ENCODE measurements at regions of chr1 and their contacts with region 1.

Region 1: DNA sequence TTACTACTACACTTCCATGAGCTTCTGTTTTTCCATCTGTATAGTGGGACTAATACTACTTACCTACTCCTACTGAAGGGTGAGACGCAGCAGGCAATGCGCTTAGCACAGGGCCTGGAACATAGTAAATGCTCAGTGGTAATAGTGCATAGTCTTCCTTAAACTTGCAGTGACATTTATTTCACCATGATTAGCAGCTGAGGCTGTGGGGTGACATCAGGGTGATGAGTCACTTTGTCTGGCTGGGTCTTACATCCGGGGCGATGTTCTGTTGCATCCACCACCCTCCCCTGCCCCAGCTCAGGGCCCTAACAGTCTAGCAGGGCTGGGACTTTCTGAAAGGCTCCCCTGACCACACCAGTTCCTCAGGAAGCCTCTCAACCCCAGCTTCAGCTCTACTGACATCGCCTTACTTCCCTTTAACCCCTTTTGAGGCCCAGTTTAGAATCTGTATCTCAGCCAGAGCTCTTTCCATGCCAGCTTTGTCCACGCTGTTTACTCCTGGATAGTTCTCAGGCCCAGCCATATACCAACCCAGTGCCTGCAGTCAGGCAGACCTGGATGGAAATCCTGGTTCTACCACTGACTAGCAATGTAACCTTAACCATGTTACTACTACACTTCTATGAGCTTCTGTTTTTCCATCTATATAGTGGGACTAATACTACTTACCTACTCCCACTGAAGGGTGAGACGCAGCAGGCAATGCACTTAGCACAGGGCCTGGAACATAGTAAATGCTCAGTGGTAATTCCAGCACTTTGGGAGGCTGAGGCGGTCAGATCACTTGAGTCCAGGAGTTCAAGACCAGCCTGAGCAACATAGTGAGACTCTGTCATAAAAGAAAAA is 66.3 kb downstream of the CD58 start:
- DNase-seq: peak; percentile 96
- H3K4me3 Mint-ChIP-seq: peak overlapping the region; percentile 46
- H3K27ac Mint-ChIP-seq: peak overlapping the region; percentile 96
- H3K4me1 Mint-ChIP-seq: peaks cover 72% of the 10 kb centered on the region
- H3K27me3 Mint-ChIP-seq: no peaks in the 10 kb centered on the region

Region 2: DNA sequence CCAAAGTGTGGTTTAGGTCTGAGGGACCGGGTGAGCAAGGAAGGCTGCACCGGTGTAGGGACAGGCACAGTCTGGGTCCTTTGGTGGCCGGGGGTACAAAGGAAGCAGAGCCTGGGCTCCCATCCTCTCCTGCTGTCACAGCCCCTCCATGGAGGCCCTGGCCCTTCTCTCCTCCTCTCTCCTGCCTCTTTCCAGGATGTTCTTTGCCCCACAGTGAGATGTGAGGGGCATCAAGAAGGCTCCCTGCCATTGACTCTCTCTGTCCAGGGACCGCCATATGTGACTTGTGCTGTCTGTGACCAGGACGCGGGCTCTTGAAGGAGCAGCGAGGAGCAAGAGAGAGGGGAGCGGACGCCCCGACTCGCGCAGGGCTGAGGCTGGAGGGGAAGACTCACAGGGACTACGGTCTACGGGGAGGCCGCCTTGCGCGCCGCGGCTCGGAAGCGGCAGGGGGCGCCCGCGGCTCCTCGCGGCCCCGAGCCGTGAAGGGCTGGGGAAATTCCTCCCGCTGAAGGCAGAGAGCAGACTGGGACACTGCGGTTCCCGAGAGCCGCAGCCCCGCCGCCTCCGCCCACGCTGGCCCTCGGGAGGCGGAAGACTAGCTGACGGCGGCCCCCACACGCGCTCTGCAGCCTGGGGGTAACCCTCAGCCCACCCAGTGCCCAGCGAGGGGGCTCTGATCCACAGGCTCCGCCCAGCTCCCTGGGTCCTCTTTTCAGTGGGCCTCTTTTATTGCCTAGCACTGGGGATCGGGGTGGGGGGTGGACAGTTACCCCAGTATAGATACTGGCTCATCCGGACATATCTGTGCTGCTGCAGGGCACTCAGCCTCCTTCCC is 352.6 kb before region 1 on chr1:
- intact Hi-C with region 1: loop called (anchors 5 kb)
- DNase-seq: peak; percentile 94
- H3K4me3 Mint-ChIP-seq: peak overlapping the region; percentile 77
- H3K27ac Mint-ChIP-seq: peak overlapping the region; percentile 74
- H3K4me1 Mint-ChIP-seq: peaks cover 13% of the 10 kb centered on the region
- H3K27me3 Mint-ChIP-seq: peaks cover 33% of the 10 kb centered on the region

Region 3: DNA sequence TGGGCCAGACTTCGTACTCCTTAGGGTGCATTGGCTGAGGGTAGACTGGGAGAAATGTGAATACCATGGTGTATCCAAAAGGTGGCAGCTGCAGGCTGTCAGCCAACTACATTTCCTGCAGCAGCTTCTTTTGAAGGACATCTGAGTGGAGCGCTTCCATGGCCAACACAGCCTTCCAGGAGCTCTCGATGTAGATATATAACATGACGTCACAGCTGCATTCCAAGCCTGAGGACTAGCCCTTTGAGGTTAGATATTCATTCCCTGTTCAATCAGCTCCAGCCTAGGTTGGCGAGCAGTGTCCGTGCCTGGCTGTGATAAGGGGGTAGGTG is 285.6 kb before region 1 on chr1:
- intact Hi-C with region 1: no loop called
- DNase-seq: no peak
- H3K4me3 Mint-ChIP-seq: no peak overlapping the region
- H3K27ac Mint-ChIP-seq: no peak overlapping the region
- H3K4me1 Mint-ChIP-seq: no peaks in the 10 kb centered on the region
- H3K27me3 Mint-ChIP-seq: peaks cover 15% of the 10 kb centered on the region

Region 4: GRCh38 chr1:116418091-116418830 is 86.3 kb before region 1 on chr1:
- intact Hi-C with region 1: loop called (anchors 5 kb)
- DNase-seq: peak; percentile 96
- H3K4me3 Mint-ChIP-seq: peak overlapping the region; percentile 89
- H3K27ac Mint-ChIP-seq: peak overlapping the region; percentile 88
- H3K4me1 Mint-ChIP-seq: peaks cover 47% of the 10 kb centered on the region
- H3K27me3 Mint-ChIP-seq: peaks cover 9% of the 10 kb centered on the region

Region 5: DNA sequence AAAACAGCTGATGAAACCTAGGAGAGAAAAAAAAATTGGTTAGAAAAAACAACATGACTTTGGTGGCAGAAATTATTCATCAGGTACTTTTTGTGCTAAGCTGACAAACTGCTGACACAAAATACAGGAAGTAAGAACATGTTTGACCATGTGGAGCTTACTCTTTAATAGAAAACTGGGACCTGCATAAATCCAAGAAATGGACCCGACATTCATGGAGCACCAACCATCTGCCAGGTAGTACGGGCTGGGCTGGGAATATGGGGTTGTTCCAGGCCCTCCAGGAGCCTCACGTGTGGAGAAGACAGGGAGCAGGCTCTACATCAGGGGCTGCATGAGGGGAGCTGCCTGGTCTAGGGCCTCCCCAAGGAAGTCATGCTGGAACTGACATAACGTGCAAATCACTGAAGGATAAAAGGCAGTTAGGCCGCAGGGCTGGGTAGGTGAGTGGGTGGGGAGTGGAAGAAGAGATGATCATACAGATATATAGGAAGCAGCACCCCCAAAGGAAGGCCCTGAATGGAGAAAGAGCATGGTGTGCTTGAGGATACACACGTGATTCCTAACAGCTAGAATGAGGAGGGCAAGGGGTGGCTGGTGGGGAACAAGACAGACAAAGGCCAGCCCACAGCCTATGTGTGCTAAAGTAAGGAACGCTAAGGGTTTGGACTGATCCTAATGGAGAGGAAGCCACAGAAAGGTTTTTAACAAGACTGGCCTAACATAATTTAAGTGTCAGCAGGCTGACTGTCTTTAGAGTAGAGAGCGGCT is 40.2 kb after region 1 on chr1:
- intact Hi-C with region 1: loop called (anchors 2 kb)
- DNase-seq: no peak
- H3K4me3 Mint-ChIP-seq: peak overlapping the region; percentile 81
- H3K27ac Mint-ChIP-seq: peak overlapping the region; percentile 98
- H3K4me1 Mint-ChIP-seq: peaks cover 70% of the 10 kb centered on the region
- H3K27me3 Mint-ChIP-seq: no peaks in the 10 kb centered on the region

Region 6: DNA sequence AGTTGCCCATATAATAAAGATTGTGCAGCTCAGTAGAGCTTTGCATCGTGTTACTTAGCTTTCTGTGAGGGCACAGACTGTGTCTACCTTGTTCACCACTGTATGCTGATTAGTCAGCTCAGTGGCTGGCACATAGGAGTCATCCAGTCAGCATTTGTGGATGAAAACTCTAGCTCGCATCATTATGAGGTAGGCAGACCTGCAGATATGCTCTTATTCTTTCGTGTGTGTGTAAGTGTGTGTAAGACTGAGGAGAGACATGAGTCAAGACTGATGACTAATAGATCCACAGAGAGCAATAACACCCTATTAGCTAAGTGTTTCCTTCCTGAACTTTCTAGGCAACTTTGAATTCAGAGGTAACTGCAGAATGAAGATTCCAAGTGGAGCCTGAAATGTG is 572.7 kb after region 1 on chr1:
- intact Hi-C with region 1: loop called (anchors 2 kb)
- DNase-seq: no peak
- H3K4me3 Mint-ChIP-seq: no peak overlapping the region
- H3K27ac Mint-ChIP-seq: peak overlapping the region; percentile 91
- H3K4me1 Mint-ChIP-seq: peaks cover 17% of the 10 kb centered on the region
- H3K27me3 Mint-ChIP-seq: no peaks in the 10 kb centered on the region

Measured in activated CD4-positive, alpha-beta T cell treated with anti-CD3 and anti-CD28 coated beads, Interleukin-2, amount 10 ng/mL, durations not matched to agents 24 days and 14 days (primary cell).